Activated T-helper 2 cell treated with anti-CD3 and anti-CD28 coated beads, Interferon-gamma antibody, Interleukin-2, Interleukin-4, amounts not matched to agents 10 μg/mL and 5 μg/mL and 100 μg/mL, durations not matched to agents 14 hours and 24 hours and 36 hours (primary cell): ENCODE measurements at regions of chr18 and their contacts with region 1.

Region 1: GRCh38 chr18:56650944-56651770 is at the start of gene WDR7:
- DNase-seq: peak; percentile 93
- H3K4me3 Mint-ChIP-seq: peak within 1 kb of the TSS; percentile 88
- H3K27ac Mint-ChIP-seq: peak within 1 kb of the TSS; percentile 91
- H3K4me1 Mint-ChIP-seq: peaks cover 59% of the 10 kb centered on the region
- H3K27me3 Mint-ChIP-seq: no peaks in the 10 kb centered on the region
- total RNA-seq, gene WDR7: 25.4 and 27.1 TPM in 2 replicates

Region 2: DNA sequence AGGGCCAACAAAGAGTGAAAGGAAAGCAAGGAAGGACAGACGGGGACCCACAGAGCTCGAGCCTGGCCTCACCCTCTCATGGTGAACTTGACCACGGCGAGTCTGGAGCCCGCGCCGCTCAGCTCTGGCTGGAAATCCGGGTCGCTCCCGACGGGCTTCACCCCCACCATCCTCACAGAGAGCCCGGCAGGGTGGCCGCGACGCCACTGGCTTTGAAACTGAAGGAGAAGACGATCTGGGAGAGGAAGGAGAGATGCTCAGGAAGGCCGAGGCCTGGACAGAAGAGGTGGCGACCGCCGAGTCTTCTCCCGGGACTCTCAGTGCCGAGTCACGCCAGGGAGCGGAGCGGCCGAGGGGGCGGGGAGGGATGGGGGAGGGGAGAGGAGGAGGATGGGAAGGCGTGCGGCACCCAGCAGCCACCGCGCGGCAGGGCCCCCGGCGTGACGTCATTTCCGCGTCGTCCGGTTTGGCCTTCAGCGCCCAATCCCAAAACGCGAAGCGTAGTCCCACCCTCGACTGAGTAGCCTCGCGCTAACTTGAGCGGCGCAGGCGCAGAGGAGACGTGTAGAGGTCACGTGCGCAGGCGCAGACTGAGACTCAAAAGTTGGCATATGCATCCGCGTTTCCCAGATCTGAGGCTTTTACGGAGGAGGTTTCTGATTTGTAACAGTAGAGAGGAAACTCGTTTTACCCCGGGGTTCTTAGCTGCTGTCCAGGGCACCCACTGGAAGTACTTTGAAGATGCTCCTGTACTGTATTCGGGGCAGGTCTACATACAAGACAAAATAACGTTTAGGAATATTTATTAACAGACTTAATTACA is 12.7 kb before region 1 on chr18 and contains the start of gene TXNL1:
- intact Hi-C with region 1: loop called (anchors 1 kb)
- DNase-seq: peak; percentile 98
- H3K4me3 Mint-ChIP-seq: peak within 1 kb of the TSS; percentile 99
- H3K27ac Mint-ChIP-seq: peak within 1 kb of the TSS; percentile 87
- H3K4me1 Mint-ChIP-seq: peaks cover 36% of the 10 kb centered on the region
- H3K27me3 Mint-ChIP-seq: no peaks in the 10 kb centered on the region
- total RNA-seq, gene TXNL1: 95.1 and 96.3 TPM in 2 replicates

Region 3: GRCh38 chr18:56672391-56672790 is 21.2 kb after region 1 on chr18:
- intact Hi-C with region 1: loop called (anchors 2 kb)
- DNase-seq: no peak
- H3K4me3 Mint-ChIP-seq: no peak overlapping the region
- H3K27ac Mint-ChIP-seq: no peak overlapping the region
- H3K4me1 Mint-ChIP-seq: peaks cover 17% of the 10 kb centered on the region
- H3K27me3 Mint-ChIP-seq: no peaks in the 10 kb centered on the region

Region 4: GRCh38 chr18:56691530-56691929 is 40.4 kb after region 1 on chr18:
- intact Hi-C with region 1: no loop called
- DNase-seq: no peak
- H3K4me3 Mint-ChIP-seq: no peak overlapping the region
- H3K27ac Mint-ChIP-seq: no peak overlapping the region
- H3K4me1 Mint-ChIP-seq: peaks cover 2% of the 10 kb centered on the region
- H3K27me3 Mint-ChIP-seq: no peaks in the 10 kb centered on the region

Region 5: GRCh38 chr18:56709463-56709862 is 58.3 kb after region 1 on chr18:
- intact Hi-C with region 1: loop called (anchors 2 kb)
- DNase-seq: peak; percentile 41
- H3K4me3 Mint-ChIP-seq: no peak overlapping the region
- H3K27ac Mint-ChIP-seq: no peak overlapping the region
- H3K4me1 Mint-ChIP-seq: peaks cover 18% of the 10 kb centered on the region
- H3K27me3 Mint-ChIP-seq: no peaks in the 10 kb centered on the region

Region 6: DNA sequence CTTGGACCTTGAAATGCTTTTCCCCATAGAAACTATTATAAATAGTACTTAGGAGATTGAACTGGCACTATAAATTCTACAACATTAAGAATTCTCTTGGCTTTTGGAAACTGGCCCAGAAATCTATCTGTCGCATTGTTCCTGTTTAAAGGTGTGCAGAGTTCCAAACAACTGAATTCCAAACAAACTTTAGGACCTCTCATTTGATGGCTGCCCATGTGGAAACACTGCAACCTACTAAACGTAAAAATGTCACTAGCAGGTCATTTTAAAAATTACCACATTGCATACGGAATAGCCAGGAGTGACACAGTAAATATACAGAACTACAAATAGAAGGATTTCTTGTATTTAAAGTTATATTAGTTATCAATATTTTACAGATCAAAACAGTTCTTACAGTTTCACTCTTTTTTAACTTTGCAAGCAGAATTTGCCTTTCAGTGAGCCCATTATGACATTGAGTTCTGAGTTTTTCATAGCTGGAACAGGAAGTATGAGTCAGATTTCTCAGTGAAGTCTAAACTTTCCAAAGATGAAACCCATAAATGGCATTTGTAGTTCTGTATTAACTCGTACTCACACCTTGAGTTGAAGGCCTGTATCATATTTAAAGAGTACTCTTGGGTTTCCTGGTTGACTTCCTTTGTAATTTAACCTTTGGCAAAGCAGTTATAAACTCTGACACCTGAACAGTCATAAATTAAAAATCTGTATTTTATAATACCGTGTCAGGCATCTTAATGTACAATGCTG is 353.4 kb after region 1 on chr18:
- intact Hi-C with region 1: loop called (anchors 10 kb)
- DNase-seq: no peak
- H3K4me3 Mint-ChIP-seq: peak overlapping the region; percentile 23
- H3K27ac Mint-ChIP-seq: peak overlapping the region; percentile 49
- H3K4me1 Mint-ChIP-seq: peaks cover 34% of the 10 kb centered on the region
- H3K27me3 Mint-ChIP-seq: no peaks in the 10 kb centered on the region

Region 7: GRCh38 chr18:57586251-57587049 is 935.3 kb after region 1 on chr18 and contains the start of gene FECH:
- intact Hi-C with region 1: loop called (anchors 10 kb)
- DNase-seq: peak; percentile 66
- H3K4me3 Mint-ChIP-seq: peak within 1 kb of the TSS; percentile 87
- H3K27ac Mint-ChIP-seq: peak within 1 kb of the TSS; percentile 67
- H3K4me1 Mint-ChIP-seq: peaks cover 16% of the 10 kb centered on the region
- H3K27me3 Mint-ChIP-seq: no peaks in the 10 kb centered on the region
- total RNA-seq, gene FECH: 17.4 and 21.9 TPM in 2 replicates

Region 8: GRCh38 chr18:57621246-57621604 is 970.1 kb after region 1 on chr18:
- intact Hi-C with region 1: loop called (anchors 1 kb)
- DNase-seq: no peak
- H3K4me3 Mint-ChIP-seq: peak overlapping the region; percentile 95
- H3K27ac Mint-ChIP-seq: peak overlapping the region; percentile 97
- H3K4me1 Mint-ChIP-seq: peaks cover 11% of the 10 kb centered on the region
- H3K27me3 Mint-ChIP-seq: no peaks in the 10 kb centered on the region